Panc1 (cell line): ENCODE measurements at regions of chr5 and their contacts with region 1.

Region 1: DNA sequence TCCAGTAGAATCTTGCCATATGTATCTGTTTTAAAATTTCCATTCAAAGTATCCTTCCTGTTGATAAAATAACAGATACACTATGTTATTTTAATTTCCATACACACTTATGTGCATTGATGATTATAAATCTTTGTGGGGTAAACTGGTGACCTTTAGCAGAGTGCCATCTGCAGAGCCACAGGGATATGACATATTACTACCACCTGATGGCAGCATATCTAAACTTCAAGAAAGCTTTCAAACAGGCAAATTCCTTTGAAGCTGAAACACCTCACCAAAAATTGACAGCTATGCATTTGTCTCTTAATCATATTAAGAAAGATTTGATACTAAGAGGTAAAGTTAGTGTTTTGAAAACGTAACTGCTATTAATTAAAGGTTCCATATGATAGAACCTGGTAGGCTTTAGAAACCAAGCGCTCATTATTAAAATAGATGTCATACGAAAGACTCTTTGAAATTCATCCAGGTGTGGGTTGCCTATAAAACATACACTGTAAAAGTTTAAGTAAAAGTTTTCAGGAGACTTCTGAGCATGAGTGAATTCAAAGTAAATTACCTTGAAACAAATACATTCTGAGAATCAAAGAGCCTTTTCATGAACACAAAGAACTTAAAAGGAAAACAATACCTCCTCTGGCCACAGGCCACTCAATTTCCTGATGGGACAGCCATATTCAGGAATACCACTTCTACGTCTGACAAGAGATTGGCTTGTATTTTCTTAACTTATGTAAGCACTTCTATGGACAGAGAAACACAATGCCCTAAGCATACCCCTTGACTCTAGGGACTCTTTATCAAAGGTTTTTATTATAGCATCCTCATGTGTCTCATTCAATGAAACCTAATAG is 93.3 kb downstream of the KIAA0825 start:
- DNase-seq: peak; percentile 25
- ATAC-seq: peak; percentile 87
- H3K4me3 ChIP-seq: no peak overlapping the region
- H3K27ac ChIP-seq: no peak overlapping the region
- H3K4me1 ChIP-seq: no peaks in the 10 kb centered on the region
- H3K27me3 ChIP-seq: no peaks in the 10 kb centered on the region
- CTCF ChIP-seq: peak; percentile 75; the same call in 1 of the 2 replicates

Region 2: DNA sequence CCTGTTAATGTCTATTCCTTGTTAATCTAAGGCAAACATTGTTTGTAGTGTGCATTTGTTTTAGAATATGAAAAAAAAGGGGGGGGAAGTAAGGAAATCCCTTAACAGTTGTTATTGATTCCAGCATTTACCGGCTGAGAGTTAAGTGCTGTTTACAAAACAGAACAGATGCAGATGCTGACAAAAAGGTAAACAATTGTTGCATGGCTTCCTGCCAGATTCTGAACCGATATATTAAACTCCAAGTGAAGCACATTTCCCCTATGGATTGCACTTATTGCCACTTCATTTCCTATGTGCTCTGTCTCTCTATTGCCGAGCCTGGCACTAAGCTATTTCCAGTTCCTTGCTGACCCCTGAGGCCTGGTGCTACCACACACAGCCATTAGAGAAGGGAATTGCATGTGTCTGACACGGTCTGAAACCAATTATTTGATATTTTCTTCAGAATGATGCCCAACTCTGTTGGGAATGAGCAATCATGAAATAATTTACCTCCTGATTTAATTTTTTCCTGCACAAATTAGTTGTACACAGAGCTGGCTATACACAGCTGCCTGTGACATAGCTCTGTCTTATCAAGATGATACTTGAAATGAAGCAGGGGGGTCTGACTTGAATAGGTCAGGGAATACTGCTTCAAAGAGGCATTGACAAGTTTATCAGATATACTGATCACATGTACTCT is 16.5 kb before region 1 on chr5:
- CTCF ChIA-PET with region 1: no interaction called
- POLR2A ChIA-PET with region 1: no interaction called
- in situ Hi-C with region 1: no loop called
- intact Hi-C with region 1: no loop called
- DNase-seq: no peak
- ATAC-seq: no peak
- H3K4me3 ChIP-seq: no peak overlapping the region
- H3K27ac ChIP-seq: no peak overlapping the region
- H3K4me1 ChIP-seq: no peaks in the 10 kb centered on the region
- H3K27me3 ChIP-seq: no peaks in the 10 kb centered on the region
- CTCF ChIP-seq: no peak

Region 3: GRCh38 chr5:94540856-94541494 is 15.9 kb after region 1 on chr5:
- CTCF ChIA-PET with region 1: no interaction called
- POLR2A ChIA-PET with region 1: no interaction called
- in situ Hi-C with region 1: no loop called
- intact Hi-C with region 1: no loop called
- DNase-seq: no peak
- ATAC-seq: no peak
- H3K4me3 ChIP-seq: no peak overlapping the region
- H3K27ac ChIP-seq: no peak overlapping the region
- H3K4me1 ChIP-seq: no peaks in the 10 kb centered on the region
- H3K27me3 ChIP-seq: no peaks in the 10 kb centered on the region
- CTCF ChIP-seq: no peak

Region 4: DNA sequence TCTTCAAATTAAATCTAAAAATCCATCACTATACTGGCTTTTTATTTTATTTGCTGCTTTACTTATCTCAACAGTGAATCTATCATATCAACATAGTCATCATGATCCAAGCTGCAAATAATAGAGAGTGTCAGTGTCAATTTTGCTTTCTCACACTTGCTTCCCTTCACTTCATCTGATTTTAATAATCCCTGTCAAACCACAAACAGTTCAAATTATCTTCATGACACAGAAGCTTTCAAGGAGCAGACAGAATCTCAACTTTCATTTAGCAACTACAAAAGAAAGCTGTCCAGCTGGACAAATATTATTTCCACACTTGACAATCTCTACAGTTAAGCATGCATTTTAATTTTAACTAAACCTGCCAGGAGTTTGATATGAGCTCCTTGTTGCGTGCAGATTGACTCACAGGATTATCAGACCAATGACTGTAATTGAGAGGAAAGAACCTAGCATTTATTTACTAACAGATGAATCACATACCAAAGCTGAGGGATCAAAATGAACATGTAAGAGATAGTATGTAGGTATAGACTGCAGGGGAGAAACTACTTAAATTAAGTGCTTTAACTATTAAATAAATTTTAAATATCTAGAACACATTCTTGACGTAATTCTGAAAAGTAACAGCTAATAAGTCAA is 37.4 kb after region 1 on chr5:
- CTCF ChIA-PET with region 1: no interaction called
- POLR2A ChIA-PET with region 1: no interaction called
- in situ Hi-C with region 1: no loop called
- intact Hi-C with region 1: no loop called
- DNase-seq: no peak
- ATAC-seq: no peak
- H3K4me3 ChIP-seq: no peak overlapping the region
- H3K27ac ChIP-seq: no peak overlapping the region
- H3K4me1 ChIP-seq: no peaks in the 10 kb centered on the region
- H3K27me3 ChIP-seq: no peaks in the 10 kb centered on the region
- CTCF ChIP-seq: no peak

Region 5: GRCh38 chr5:94693043-94693822 is 168.2 kb after region 1 on chr5:
- CTCF ChIA-PET with region 1: interaction called, 6 read pairs
- POLR2A ChIA-PET with region 1: no interaction called
- in situ Hi-C with region 1: no loop called
- intact Hi-C with region 1: loop called (anchors 2 kb)
- DNase-seq: peak; percentile 7
- ATAC-seq: peak; percentile 77
- H3K4me3 ChIP-seq: no peak overlapping the region
- H3K27ac ChIP-seq: no peak overlapping the region
- H3K4me1 ChIP-seq: no peaks in the 10 kb centered on the region
- H3K27me3 ChIP-seq: no peaks in the 10 kb centered on the region
- CTCF ChIP-seq: peak; percentile 44; the same call in 1 of the 2 replicates

Region 6: GRCh38 chr5:94740286-94740685 is 215.2 kb after region 1 on chr5:
- CTCF ChIA-PET with region 1: interaction called, 3 read pairs
- POLR2A ChIA-PET with region 1: no interaction called
- in situ Hi-C with region 1: no loop called
- intact Hi-C with region 1: loop called (anchors 5 kb)
- DNase-seq: no peak
- ATAC-seq: no peak
- H3K4me3 ChIP-seq: no peak overlapping the region
- H3K27ac ChIP-seq: no peak overlapping the region
- H3K4me1 ChIP-seq: no peaks in the 10 kb centered on the region
- H3K27me3 ChIP-seq: no peaks in the 10 kb centered on the region
- CTCF ChIP-seq: no peak

Region 7: DNA sequence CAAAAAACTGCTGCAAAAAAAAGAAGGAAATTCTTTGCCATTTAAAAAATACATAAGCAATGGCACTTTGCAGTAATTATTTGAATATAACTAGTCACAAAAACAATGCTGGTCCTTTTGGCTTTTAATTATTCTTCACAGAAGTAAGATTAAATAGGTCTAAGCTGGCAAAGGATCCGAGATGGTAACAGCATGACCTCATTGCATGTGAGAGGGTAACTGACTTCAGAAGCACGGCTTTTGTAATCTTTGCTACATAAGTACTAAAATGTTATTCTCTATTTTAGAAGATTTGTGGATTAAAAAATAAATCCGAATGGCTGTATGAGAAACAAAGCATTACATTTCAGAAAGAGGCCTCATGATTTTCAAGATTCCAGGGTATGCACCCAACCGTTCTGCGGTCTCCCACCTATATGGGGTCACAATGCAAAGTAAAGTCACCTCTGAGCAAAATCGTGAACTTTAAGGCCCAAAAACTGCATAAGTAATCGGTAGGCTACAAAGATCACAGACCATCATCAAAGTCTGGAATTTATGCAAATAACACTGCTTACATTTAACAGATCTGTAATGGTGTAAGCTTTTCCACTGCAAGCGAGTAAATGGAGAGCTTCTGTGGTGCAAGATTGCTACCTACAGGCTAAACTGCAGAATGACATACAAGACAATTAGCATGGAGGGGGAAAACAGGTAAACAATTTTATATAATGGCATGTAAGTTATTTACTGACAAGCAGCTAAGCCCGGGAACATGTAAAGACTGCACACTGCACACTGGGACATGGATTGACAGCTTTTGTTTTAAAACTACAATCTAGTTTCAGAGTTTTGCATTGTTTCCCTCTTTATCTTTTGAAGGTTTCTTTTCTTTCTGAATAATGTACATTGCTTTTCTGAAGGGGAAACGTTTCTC is 325.0 kb after region 1 on chr5:
- CTCF ChIA-PET with region 1: no interaction called
- POLR2A ChIA-PET with region 1: no interaction called
- in situ Hi-C with region 1: no loop called
- intact Hi-C with region 1: loop called (anchors 10 kb)
- DNase-seq: no peak
- ATAC-seq: peak; percentile 85
- H3K4me3 ChIP-seq: no peak overlapping the region
- H3K27ac ChIP-seq: no peak overlapping the region
- H3K4me1 ChIP-seq: no peaks in the 10 kb centered on the region; the same call in 1 of the 2 replicates
- H3K27me3 ChIP-seq: no peaks in the 10 kb centered on the region
- CTCF ChIP-seq: peak; percentile 70